Heart left ventricle (tissue), 16 donors: ENCODE measurements at regions of chr14 and their contacts with region 1.

Region 1: GRCh38 chr14:105180592-105181548 is at the start of gene NUDT14:
- DNase-seq: peak in 3 of 5 donors; percentile 66 to 87 (median 69)
- ATAC-seq: peak in 2 of 4 donors; percentile 72 to 76
- H3K4me3 ChIP-seq: peak within 1 kb of the TSS in 11 of 12 donors; percentile 14 to 66 (median 58)
- H3K27ac ChIP-seq: peak within 1 kb of the TSS in 9 of 12 donors; percentile 19 to 74 (median 47)
- H3K4me1 ChIP-seq: peaks cover 0 to 26% (median 15%) of the 10 kb centered on the region in 12 donors
- H3K27me3 ChIP-seq: no peaks in the 10 kb centered on the region
- CTCF ChIP-seq: no peak
- POLR2A ChIP-seq: no peak
- total RNA-seq, gene NUDT14: 16.7 to 48.9 (median 23.8) TPM

Region 2: DNA sequence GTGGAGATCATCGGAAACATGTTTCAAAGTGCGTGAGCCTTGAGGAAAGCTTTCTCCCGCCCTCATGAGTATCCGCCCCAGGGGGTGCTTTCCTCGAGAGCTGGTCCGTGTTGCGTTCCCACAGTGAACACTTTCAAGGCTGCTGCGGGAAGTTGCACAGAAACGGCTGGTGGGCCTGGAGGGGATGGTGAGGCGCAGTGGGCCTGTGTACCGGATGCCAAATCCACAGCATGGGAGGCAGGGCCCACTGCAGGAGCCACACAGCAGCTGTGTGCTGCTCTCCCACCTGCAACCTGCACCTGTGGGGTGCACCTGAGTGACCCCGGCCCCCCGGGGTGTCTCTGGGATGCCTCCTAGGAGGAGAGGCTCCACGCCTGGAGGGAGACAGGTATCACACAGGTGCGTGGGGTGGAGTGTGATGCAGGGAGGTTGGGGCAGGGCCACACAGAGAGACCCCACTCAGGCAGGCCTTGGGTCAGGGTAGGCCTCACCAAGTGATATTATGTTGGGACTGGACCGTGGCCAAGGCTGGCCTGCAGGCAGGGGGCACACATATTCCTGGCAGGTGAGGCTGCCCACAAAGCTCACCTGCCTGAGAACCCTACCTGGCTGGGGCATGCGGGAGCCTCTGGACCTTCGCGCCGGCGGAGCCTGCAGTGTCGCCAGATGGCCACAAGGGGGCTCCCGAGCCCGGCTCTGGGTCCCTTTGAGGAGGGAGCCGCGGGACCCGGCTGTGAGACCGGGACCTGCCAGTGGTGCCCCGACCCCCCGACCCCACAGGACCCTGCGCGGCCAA is 356.7 kb after region 1 on chr14:
- intact Hi-C with region 1: loop called in 1 of 10 experiments (anchors 10 kb)
- DNase-seq: peak in 4 of 5 donors; percentile 46 to 76 (median 53)
- ATAC-seq: peak; percentile 36 to 74 (median 66)
- H3K4me3 ChIP-seq: no peak overlapping the region
- H3K27ac ChIP-seq: no peak overlapping the region
- H3K4me1 ChIP-seq: peaks cover 0 to 5% (median 0%) of the 10 kb centered on the region in 12 donors
- H3K27me3 ChIP-seq: peaks cover 0 to 26% (median 11%) of the 10 kb centered on the region in 9 donors
- CTCF ChIP-seq: peak; percentile 90 to 99 (median 98)
- POLR2A ChIP-seq: no peak